Activated CD4-positive, alpha-beta T cell treated with anti-CD3 and anti-CD28 coated beads, Interleukin-2, amount 10 ng/mL, durations not matched to agents 7 days and 5 days (primary cell): ENCODE measurements at regions of chr22 and their contacts with region 1.

Region 1: GRCh38 chr22:36301384-36301828 is 48.5 kb downstream of the APOL1 start:
- DNase-seq: peak; percentile 87
- H3K4me3 Mint-ChIP-seq: no peak overlapping the region
- H3K27ac Mint-ChIP-seq: peak overlapping the region; percentile 60
- H3K4me1 Mint-ChIP-seq: peaks cover 16% of the 10 kb centered on the region
- H3K27me3 Mint-ChIP-seq: no peaks in the 10 kb centered on the region

Region 2: GRCh38 chr22:36191106-36191836 is 110.1 kb before region 1 on chr22:
- CTCF ChIA-PET with region 1: no interaction called
- POLR2A ChIA-PET with region 1: no interaction called
- DNase-seq: no peak
- H3K4me3 Mint-ChIP-seq: no peak overlapping the region
- H3K27ac Mint-ChIP-seq: no peak overlapping the region
- H3K4me1 Mint-ChIP-seq: peaks cover 7% of the 10 kb centered on the region
- H3K27me3 Mint-ChIP-seq: peaks cover 11% of the 10 kb centered on the region

Region 3: GRCh38 chr22:36286471-36287224 is 14.8 kb before region 1 on chr22:
- CTCF ChIA-PET with region 1: interaction called, 35 read pairs
- POLR2A ChIA-PET with region 1: no interaction called
- DNase-seq: peak; percentile 72
- H3K4me3 Mint-ChIP-seq: no peak overlapping the region
- H3K27ac Mint-ChIP-seq: peak overlapping the region; percentile 83
- H3K4me1 Mint-ChIP-seq: peaks cover 46% of the 10 kb centered on the region
- H3K27me3 Mint-ChIP-seq: no peaks in the 10 kb centered on the region

Region 4: DNA sequence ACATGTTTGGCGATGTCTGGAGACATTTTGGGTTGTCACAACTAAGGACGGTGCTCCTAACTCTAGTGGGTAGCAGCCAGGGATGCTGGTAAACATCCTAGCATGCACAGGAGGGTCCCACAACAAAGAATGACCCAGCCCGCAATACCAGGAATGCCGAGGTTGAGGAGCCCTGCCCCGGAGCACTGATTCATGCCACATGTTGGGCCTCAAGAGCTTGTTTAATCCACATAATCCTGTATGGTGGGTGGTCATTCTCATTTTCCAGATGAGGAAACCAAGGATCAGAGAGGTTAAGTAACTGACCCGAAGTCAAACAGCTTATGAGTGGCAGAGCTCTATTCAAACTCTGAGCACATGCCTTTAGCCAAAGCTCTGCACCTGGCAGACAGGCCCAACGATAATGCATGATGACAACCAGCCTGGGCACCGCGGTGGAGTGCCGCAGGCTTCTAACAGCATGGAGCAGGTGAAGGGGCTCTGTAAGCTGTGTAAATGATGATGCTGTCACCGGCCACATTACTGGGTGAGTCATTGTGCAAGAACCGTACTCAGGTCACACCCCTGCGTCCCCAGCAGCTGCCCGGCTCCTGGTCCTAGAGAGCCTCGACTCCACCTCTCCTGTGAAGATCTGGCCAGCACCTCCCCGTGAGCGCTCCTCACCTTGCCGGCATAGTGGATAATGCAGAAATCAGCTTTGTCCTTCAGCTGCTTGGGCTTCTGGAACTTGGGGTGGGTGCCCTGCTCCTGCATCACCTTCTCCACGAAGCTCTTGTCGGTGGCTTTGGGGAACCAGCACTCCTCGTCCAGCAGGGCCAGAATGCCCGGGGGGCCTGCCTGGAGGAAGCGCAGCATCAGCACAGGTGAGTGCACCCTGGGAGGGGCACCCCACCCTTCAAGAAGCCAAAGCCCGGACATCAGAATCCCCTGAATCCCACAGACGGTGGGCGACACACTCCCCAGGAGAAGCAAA is 10.3 kb after region 1 on chr22:
- CTCF ChIA-PET with region 1: interaction called, 20 read pairs
- POLR2A ChIA-PET with region 1: interaction called, 4 read pairs
- DNase-seq: no peak
- H3K4me3 Mint-ChIP-seq: no peak overlapping the region
- H3K27ac Mint-ChIP-seq: no peak overlapping the region
- H3K4me1 Mint-ChIP-seq: peaks cover 4% of the 10 kb centered on the region
- H3K27me3 Mint-ChIP-seq: no peaks in the 10 kb centered on the region

Region 5: DNA sequence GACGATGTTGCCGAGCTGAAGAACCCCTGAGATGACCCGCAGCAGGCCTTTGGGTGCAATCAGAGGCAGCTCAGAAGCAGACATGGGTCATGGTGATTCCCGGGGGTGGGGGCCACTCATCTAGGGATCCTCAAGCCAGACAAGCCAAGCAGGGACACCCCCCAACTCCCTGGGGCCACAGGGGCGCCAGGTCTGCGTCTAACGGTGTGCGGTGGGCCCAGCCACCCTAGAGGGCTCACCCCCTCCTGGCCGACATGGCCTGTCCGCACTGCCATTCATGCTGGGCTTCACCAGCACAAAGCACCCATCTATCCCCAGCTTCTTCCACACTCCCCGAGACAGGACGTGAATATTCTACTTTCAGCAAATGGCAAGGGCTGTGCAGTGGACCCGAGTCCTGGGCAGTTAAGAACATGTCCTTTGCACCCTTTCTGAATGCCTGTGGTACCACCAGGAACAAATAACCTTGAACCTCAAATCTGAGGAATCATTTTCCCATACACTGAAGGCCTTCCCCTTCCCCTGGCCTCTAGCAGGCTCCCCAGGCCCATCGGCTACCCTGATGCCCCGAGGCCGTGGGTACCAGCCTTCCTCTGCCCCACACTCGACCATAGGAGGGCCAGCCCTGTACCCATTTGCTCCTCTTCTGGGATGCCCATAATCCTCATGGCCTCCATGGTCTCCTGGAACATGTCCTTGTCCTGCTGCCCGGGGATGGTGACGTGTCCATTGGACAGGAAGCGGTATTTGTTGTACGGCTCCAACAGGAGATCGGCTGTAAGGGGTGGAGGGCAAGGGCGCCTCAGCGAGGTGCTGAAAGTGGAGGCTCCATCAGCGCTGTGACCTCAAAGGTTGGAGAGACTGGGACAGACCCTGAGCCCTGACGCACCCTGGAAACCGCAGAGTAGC is 18.4 kb after region 1 on chr22:
- CTCF ChIA-PET with region 1: interaction called, 10 read pairs
- POLR2A ChIA-PET with region 1: interaction called, 4 read pairs
- DNase-seq: no peak
- H3K4me3 Mint-ChIP-seq: peak overlapping the region; percentile 30
- H3K27ac Mint-ChIP-seq: peak overlapping the region; percentile 66
- H3K4me1 Mint-ChIP-seq: peaks cover 3% of the 10 kb centered on the region
- H3K27me3 Mint-ChIP-seq: no peaks in the 10 kb centered on the region

Region 6: DNA sequence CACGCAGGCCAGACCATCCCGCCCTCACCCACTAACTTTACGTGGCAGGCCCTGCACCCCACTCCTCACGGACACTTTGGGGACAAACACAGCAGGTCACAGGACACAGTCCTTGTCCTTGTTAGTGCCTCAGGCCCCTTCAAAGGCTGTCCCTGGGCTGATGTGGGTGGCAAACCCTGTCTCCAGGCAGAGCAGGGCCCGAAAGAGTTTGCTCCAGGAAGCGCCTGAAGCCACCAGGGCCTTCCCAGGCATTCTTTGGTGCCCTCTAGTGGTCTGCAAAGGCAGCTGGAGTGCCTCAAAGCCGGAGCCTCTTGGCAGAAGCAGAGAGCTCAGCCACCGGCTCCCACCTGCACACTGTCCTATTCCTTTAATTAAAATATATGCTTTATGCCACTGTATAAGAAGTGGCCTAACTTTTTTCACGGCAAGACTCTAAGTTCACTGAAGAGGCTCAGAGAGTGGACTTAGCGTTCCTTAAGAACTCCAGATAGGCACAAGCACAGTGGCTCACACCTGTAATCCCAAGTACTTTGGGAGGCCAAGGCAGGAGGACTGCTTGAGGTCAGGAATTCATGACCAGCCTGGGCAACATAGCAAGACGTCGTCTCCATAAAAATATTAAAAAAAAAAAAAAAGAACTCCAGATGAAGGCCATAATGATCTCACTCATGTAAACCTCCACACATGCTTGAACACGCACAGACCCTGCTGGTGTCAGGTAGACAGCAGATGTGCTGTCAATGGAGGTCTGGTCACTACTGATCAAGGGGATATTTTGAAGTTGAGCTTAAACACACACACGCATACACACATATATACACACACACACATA is 169.0 kb after region 1 on chr22:
- CTCF ChIA-PET with region 1: interaction called, 44 read pairs
- POLR2A ChIA-PET with region 1: no interaction called
- DNase-seq: peak; percentile 91
- H3K4me3 Mint-ChIP-seq: no peak overlapping the region
- H3K27ac Mint-ChIP-seq: peak overlapping the region; percentile 74
- H3K4me1 Mint-ChIP-seq: peaks cover 44% of the 10 kb centered on the region
- H3K27me3 Mint-ChIP-seq: no peaks in the 10 kb centered on the region

Region 7: DNA sequence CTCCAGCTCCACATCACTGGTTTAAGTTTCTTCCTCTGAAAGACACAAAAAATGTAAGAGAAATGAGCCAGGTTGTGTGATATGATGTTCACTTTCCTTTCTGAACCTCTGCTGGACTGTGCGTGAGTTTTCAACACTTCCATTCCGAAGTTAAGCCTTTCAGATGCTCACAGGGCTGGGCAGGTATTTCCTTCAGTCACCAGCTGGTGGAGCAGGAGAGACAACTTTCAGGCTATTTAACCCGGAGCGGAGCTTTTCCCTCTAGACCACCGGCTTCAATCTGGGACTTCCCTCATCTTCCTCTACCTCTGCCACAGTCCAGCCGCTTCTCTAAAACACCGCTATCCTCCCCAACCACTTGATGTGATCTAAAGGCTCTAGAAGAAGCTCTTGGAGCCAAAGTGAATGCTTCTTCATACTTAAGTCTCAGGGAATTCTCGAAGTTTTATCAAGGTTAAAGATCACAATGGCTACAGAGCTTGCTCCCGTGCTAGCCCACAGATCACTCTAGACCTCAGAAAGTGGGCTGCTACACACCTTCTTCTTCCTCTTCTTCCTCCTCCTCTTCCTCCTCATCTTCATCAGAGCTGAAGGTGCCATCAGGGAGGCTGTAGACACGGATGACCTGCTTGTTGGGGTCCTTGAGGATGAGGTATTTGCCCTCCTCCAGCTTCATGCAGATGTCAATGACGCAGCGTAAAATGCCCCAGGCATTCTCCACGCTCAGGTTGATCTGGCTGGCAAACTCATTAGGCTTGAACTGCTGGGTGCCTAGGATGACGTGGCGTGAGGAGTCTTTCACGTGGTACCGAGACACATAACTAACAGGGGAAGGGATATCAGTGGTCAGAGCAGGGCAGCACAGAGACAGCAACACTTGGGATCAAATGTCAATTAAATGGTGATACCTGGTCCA is 209.8 kb after region 1 on chr22:
- CTCF ChIA-PET with region 1: interaction called, 10 read pairs
- POLR2A ChIA-PET with region 1: no interaction called
- DNase-seq: peak; percentile 50
- H3K4me3 Mint-ChIP-seq: no peak overlapping the region
- H3K27ac Mint-ChIP-seq: peak overlapping the region; percentile 22
- H3K4me1 Mint-ChIP-seq: peaks cover 14% of the 10 kb centered on the region
- H3K27me3 Mint-ChIP-seq: no peaks in the 10 kb centered on the region

Region 8: GRCh38 chr22:36636916-36637315 is 335.5 kb after region 1 on chr22:
- CTCF ChIA-PET with region 1: no interaction called
- POLR2A ChIA-PET with region 1: no interaction called
- DNase-seq: no peak
- H3K4me3 Mint-ChIP-seq: no peak overlapping the region
- H3K27ac Mint-ChIP-seq: no peak overlapping the region
- H3K4me1 Mint-ChIP-seq: no peaks in the 10 kb centered on the region
- H3K27me3 Mint-ChIP-seq: peaks cover 35% of the 10 kb centered on the region